PC-3 (cell line): ENCODE measurements at regions of chr1 and their contacts with region 1.

Region 1: DNA sequence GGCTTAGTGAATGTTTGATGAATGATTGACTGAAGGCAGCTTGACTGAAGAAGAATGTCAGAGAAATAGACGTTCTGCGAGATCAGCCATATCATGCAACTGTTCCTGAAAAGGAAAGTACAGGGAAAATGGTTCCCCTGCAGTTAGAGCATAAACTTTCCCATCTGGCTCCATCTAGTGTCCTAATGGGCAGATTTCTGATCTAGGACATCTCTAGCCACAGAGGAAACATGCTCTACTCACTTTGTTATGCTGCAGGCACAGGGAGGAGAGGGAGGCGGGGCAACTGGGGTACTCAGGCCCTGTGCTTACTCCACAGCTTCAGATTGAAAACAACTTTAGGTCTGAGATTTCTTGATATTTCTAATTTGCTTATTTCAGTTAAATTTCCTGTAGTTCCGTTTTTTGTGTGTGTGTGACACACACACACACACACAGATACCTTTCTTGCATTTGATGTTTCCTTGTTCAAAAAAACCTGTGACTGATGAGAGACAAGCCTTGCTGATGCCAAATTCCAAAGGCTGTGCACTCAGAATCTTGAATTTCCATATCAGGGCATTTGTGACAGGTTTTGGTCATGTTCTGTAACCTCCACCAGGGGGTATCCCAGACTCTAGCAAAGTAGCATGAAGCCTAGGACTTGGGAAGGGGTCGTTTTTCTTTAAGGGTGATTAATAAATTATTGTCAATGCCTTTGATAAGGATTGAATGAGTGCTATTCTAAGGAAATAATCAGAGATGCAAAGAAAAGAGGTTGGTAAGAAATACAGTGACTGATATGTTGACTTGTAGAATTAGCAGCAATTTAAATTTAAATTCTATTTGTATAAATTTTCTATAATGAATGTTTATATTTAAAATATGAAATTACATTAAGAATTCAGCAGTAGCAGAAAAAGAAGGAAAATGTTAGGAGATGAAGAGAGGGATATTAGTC is 139.7 kb upstream of the BEND5 start:
- DNase-seq: peak; percentile 78
- ATAC-seq: peak; percentile 92
- H3K4me3 ChIP-seq: no peak overlapping the region
- H3K27ac ChIP-seq: 0 out of 2 replicates have a peak overlapping the region, but pooled peaks have one; percentile 13
- H3K4me1 ChIP-seq: peaks cover 18% of the 10 kb centered on the region; the same call in 1 of the 2 replicates
- H3K27me3 ChIP-seq: no peaks in the 10 kb centered on the region
- CTCF ChIP-seq: peak; percentile 72

Region 2: GRCh38 chr1:48572646-48573261 is 343.6 kb before region 1 on chr1:
- CTCF ChIA-PET with region 1: no interaction called
- POLR2A ChIA-PET with region 1: no interaction called
- intact Hi-C with region 1: loop called (anchors 5 kb)
- DNase-seq: peak; percentile 62
- ATAC-seq: peak; percentile 94
- H3K4me3 ChIP-seq: no peak overlapping the region
- H3K27ac ChIP-seq: no peak overlapping the region
- H3K4me1 ChIP-seq: no peaks in the 10 kb centered on the region
- H3K27me3 ChIP-seq: 0 out of 2 replicates have a peak, but pooled peaks cover 17% of the 10 kb centered on the region
- CTCF ChIP-seq: peak; percentile 82

Region 3: DNA sequence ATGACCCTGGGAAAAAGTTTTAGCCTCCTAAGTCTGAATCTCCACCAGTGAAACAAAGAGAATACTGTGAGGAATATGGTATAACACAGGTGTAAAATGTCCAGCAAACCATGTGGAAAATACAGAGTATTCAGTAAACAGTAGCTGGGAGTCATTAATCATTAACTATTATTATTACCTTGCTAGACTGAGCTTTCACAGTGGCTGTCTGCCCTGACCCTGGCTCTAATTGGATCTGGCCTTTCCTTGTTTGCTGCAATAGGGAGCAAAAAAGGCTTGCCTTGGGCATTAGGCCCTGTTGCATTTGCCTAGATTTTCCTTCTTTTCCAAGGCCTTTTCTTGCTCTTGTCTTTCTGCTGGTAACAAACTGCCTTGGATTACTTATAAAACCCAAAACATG is 39.4 kb after region 1 on chr1:
- CTCF ChIA-PET with region 1: no interaction called
- POLR2A ChIA-PET with region 1: no interaction called
- intact Hi-C with region 1: no loop called
- DNase-seq: no peak
- ATAC-seq: no peak
- H3K4me3 ChIP-seq: no peak overlapping the region
- H3K27ac ChIP-seq: no peak overlapping the region
- H3K4me1 ChIP-seq: no peaks in the 10 kb centered on the region
- H3K27me3 ChIP-seq: no peaks in the 10 kb centered on the region
- CTCF ChIP-seq: no peak

Region 4: GRCh38 chr1:49013079-49013478 is 96.7 kb after region 1 on chr1:
- CTCF ChIA-PET with region 1: no interaction called
- POLR2A ChIA-PET with region 1: no interaction called
- intact Hi-C with region 1: no loop called
- DNase-seq: peak; percentile 38
- ATAC-seq: peak; percentile 15; the same call in 1 of the 2 replicates
- H3K4me3 ChIP-seq: no peak overlapping the region
- H3K27ac ChIP-seq: no peak overlapping the region
- H3K4me1 ChIP-seq: no peaks in the 10 kb centered on the region
- H3K27me3 ChIP-seq: no peaks in the 10 kb centered on the region
- CTCF ChIP-seq: no peak

Region 5: GRCh38 chr1:49102752-49103151 is 186.4 kb after region 1 on chr1:
- CTCF ChIA-PET with region 1: no interaction called
- POLR2A ChIA-PET with region 1: no interaction called
- intact Hi-C with region 1: loop called (anchors 5 kb)
- DNase-seq: peak; percentile 83
- ATAC-seq: peak; percentile 79
- H3K4me3 ChIP-seq: no peak overlapping the region
- H3K27ac ChIP-seq: peak overlapping the region; percentile 52
- H3K4me1 ChIP-seq: peaks cover 40% of the 10 kb centered on the region
- H3K27me3 ChIP-seq: no peaks in the 10 kb centered on the region
- CTCF ChIP-seq: no peak

Region 6: DNA sequence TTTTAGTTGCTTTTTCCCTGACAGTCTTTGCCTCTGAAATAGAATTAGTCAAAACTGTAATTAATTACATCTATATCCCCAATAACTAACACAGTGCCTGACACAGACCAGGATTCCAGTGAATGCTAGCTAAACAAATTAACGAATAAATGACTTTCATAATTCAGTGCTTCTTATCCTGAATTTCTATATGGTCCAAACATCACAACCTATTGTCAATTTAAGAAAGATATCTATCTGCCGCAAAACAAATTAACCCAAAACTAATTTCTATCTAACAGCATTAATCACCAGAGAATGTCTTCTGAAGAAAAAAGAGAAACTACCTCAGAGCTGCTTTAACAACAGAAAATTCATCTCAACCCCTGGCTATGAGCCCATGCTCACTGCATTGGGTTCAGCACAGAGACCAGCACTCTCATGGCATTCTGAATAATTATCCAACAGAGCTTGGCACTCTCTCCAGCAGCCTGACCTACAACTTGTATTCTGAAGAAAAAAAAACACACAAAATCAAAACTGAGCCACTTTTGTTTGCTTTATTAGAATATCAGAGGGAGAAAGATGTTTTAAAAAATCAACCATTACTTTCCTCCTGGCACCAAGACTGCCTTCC is 407.6 kb after region 1 on chr1:
- CTCF ChIA-PET with region 1: no interaction called
- POLR2A ChIA-PET with region 1: no interaction called
- intact Hi-C with region 1: loop called (anchors 2 kb)
- DNase-seq: no peak
- ATAC-seq: no peak
- H3K4me3 ChIP-seq: no peak overlapping the region
- H3K27ac ChIP-seq: no peak overlapping the region
- H3K4me1 ChIP-seq: peaks cover 30% of the 10 kb centered on the region
- H3K27me3 ChIP-seq: no peaks in the 10 kb centered on the region
- CTCF ChIP-seq: no peak

Region 7: GRCh38 chr1:49630156-49630555 is 713.8 kb after region 1 on chr1:
- CTCF ChIA-PET with region 1: no interaction called
- POLR2A ChIA-PET with region 1: no interaction called
- intact Hi-C with region 1: loop called (anchors 10 kb)
- DNase-seq: peak; percentile 45
- ATAC-seq: peak; percentile 76
- H3K4me3 ChIP-seq: no peak overlapping the region
- H3K27ac ChIP-seq: no peak overlapping the region
- H3K4me1 ChIP-seq: no peaks in the 10 kb centered on the region; the same call in 1 of the 2 replicates
- H3K27me3 ChIP-seq: no peaks in the 10 kb centered on the region
- CTCF ChIP-seq: peak; percentile 66

Region 8: DNA sequence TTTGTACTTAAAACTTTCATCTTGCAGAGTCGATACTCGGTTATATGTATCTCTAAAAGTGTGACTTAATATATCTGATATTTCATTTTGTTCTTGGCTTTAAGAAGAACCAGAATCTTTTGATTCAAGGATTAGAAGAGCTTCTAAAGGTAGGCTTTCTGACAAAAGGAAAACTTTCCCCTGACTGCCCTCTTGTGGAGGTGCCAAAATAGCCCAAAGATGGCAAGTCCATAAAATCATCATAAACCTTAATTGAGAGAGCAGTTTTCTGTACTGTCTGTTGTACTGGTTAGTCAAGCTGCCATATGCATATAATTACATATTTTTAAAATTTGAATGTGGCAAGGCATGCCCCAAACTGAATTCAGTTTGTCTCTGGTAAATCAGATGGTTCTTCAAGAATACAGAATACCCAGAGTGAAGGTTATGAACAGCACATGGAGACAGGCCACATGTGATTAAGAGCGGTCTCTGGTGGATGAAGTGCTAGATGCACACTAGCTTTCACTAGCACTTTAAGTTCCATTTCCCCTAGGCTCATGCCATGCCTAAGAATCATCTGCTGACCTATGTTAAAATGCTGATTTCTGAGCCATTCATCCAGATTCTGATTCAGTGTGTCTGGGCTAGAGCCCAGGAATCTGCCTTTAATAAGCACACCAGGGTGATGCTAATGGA is 1164.6 kb after region 1 on chr1:
- CTCF ChIA-PET with region 1: interaction called, 3 read pairs
- POLR2A ChIA-PET with region 1: no interaction called
- intact Hi-C with region 1: loop called (anchors 5 kb)
- DNase-seq: peak; percentile 64
- ATAC-seq: peak; percentile 54
- H3K4me3 ChIP-seq: no peak overlapping the region
- H3K27ac ChIP-seq: no peak overlapping the region
- H3K4me1 ChIP-seq: no peaks in the 10 kb centered on the region
- H3K27me3 ChIP-seq: no peaks in the 10 kb centered on the region
- CTCF ChIP-seq: peak; percentile 79